SK-N-SH (cell line): ENCODE measurements at regions of chr6 and their contacts with region 1.

Region 1: GRCh38 chr6:123802697-123803496 is 768 bp upstream of the NKAIN2 start:
- DNase-seq: peak; percentile 79
- H3K4me3 ChIP-seq: peak overlapping the region; percentile 24 to 50; a peak in 2 of 4 replicates
- H3K27ac ChIP-seq: no peak overlapping the region
- H3K4me1 ChIP-seq: no peaks in the 10 kb centered on the region; a peak in 1 of 4 replicates
- H3K27me3 ChIP-seq: peaks cover 34% of the 10 kb centered on the region
- CTCF ChIP-seq: peak; percentile 87
- EP300 ChIP-seq: no peak
- RAD21 ChIP-seq: peak; percentile 64

Region 2: GRCh38 chr6:123619156-123619555 is 183.7 kb before region 1 on chr6:
- CTCF ChIA-PET with region 1: no interaction called
- POLR2A ChIA-PET with region 1: no interaction called
- DNase-seq: no peak
- H3K4me3 ChIP-seq: no peak overlapping the region; a peak in 1 of 4 replicates
- H3K27ac ChIP-seq: no peak overlapping the region
- H3K4me1 ChIP-seq: no peaks in the 10 kb centered on the region
- H3K27me3 ChIP-seq: no peaks in the 10 kb centered on the region
- CTCF ChIP-seq: no peak
- EP300 ChIP-seq: no peak
- RAD21 ChIP-seq: no peak

Region 3: DNA sequence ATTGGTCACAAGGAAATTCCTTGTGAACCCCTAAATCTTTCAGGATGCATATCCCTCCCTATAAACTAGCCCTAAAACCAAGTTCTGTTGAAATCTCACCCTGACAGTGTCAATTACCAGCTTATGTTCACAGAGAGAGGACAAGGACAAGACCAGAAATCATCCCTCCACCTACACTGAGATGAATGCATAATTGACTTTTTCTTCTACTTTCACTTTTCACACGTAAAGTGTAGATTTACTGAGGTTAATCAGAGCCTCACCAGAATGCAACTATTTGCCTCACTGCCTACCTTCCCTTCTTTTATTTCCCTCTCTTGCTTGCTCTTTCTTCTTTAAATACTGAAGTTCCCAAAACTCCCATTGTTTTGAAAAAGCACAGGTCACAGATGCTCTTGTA is 14.6 kb before region 1 on chr6:
- CTCF ChIA-PET with region 1: interaction called, 19 read pairs
- POLR2A ChIA-PET with region 1: no interaction called
- DNase-seq: no peak
- H3K4me3 ChIP-seq: peak overlapping the region; percentile 9 to 47; a peak in 3 of 4 replicates
- H3K27ac ChIP-seq: no peak overlapping the region
- H3K4me1 ChIP-seq: no peaks in the 10 kb centered on the region
- H3K27me3 ChIP-seq: no peaks in the 10 kb centered on the region; the same call in 1 of the 2 replicates
- CTCF ChIP-seq: no peak
- EP300 ChIP-seq: no peak
- RAD21 ChIP-seq: no peak

Region 4: GRCh38 chr6:124110514-124110913 is 307.6 kb after region 1 on chr6:
- CTCF ChIA-PET with region 1: no interaction called
- POLR2A ChIA-PET with region 1: no interaction called
- DNase-seq: no peak
- H3K4me3 ChIP-seq: no peak overlapping the region
- H3K27ac ChIP-seq: no peak overlapping the region
- H3K4me1 ChIP-seq: no peaks in the 10 kb centered on the region
- H3K27me3 ChIP-seq: no peaks in the 10 kb centered on the region
- CTCF ChIP-seq: no peak
- EP300 ChIP-seq: no peak
- RAD21 ChIP-seq: no peak

Region 5: DNA sequence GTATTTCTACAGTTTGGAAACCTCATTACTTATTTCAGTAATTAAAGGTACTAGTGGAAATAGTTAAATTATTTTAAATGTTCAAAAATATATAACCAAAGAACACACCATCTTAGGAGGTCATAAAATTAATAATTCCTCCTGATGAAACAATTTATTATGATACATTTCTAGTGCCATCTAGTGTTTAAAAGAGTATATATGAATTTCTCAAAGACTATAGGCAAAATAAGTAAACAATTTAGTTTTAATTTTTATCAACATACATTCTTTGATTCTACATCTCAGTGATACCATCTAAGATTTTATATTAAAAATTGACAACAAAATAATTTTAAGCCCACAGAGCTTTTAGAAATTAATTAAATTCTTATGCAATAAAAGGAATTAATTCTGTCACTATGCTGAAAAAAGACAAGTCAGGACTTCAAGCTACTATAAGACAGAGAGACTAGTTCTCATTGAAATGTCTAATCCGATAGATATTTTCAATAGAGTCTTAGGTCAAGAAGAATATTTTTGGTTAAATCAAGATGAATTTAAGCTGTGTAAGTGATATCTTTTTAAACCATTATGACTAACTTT is 1051.5 kb after region 1 on chr6:
- CTCF ChIA-PET with region 1: interaction called, 10 read pairs
- POLR2A ChIA-PET with region 1: no interaction called
- DNase-seq: no peak
- H3K4me3 ChIP-seq: no peak overlapping the region
- H3K27ac ChIP-seq: no peak overlapping the region
- H3K4me1 ChIP-seq: no peaks in the 10 kb centered on the region; a peak in 1 of 4 replicates
- H3K27me3 ChIP-seq: no peaks in the 10 kb centered on the region
- CTCF ChIP-seq: peak; percentile 55
- EP300 ChIP-seq: no peak
- RAD21 ChIP-seq: no peak